Common myeloid progenitor, CD34-positive (primary cell): ENCODE measurements at regions of chr7 and their contacts with region 1.

Region 1: GRCh38 chr7:142323706-142324105 is 65.8 kb upstream of the PRSS58 start:
- DNase-seq: peak; percentile 46 to 56 (median 55)
- H3K4me3 ChIP-seq: no peak overlapping the region
- H3K27ac ChIP-seq: no peak overlapping the region
- H3K4me1 ChIP-seq: peaks cover 8 to 77% (median 63%) of the 10 kb centered on the region in 4 experiments
- H3K27me3 ChIP-seq: no peaks in the 10 kb centered on the region

Region 2: GRCh38 chr7:142279601-142280000 is 44.1 kb before region 1 on chr7:
- CTCF ChIA-PET with region 1: no interaction called
- POLR2A ChIA-PET with region 1: no interaction called
- DNase-seq: peak in 1 of 3 donors; percentile 53
- H3K4me3 ChIP-seq: no peak overlapping the region
- H3K27ac ChIP-seq: no peak overlapping the region
- H3K4me1 ChIP-seq: no peaks in the 10 kb centered on the region
- H3K27me3 ChIP-seq: peaks cover 0 to 2% (median 0%) of the 10 kb centered on the region in 5 experiments

Region 3: GRCh38 chr7:142313528-142313927 is 10.2 kb before region 1 on chr7:
- CTCF ChIA-PET with region 1: interaction called, 44 read pairs
- POLR2A ChIA-PET with region 1: interaction called, 5 read pairs
- DNase-seq: peak; percentile 87 to 99 (median 97)
- H3K4me3 ChIP-seq: peak overlapping the region in 2 of 7 experiments; percentile 45 to 49
- H3K27ac ChIP-seq: peak overlapping the region; percentile 10 to 59
- H3K4me1 ChIP-seq: peaks cover 12 to 47% (median 43%) of the 10 kb centered on the region in 4 experiments
- H3K27me3 ChIP-seq: no peaks in the 10 kb centered on the region

Region 4: GRCh38 chr7:142338633-142339501 is 15.2 kb after region 1 on chr7:
- CTCF ChIA-PET with region 1: interaction called, 165 read pairs
- POLR2A ChIA-PET with region 1: no interaction called
- DNase-seq: peak in 2 of 3 donors; percentile 57 to 64
- H3K4me3 ChIP-seq: no peak overlapping the region
- H3K27ac ChIP-seq: no peak overlapping the region
- H3K4me1 ChIP-seq: peaks cover 0 to 10% (median 3%) of the 10 kb centered on the region in 4 experiments
- H3K27me3 ChIP-seq: no peaks in the 10 kb centered on the region

Region 5: DNA sequence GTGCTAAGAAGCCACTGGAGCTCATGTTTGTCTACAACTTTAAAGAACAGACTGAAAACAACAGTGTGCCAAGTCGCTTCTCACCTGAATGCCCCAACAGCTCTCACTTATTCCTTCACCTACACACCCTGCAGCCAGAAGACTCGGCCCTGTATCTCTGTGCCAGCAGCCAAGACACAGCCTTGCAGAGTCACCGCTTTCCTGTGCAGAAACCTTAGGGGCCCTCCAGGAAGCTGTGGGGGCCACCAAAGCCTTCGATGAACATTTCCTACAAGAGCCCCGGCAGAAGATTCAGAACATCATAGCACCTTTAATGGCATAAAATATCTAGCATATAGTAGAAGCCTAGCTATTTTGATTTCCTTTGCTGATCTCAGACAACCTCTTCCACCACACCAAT is 22.1 kb after region 1 on chr7:
- CTCF ChIA-PET with region 1: interaction called, 165 read pairs
- POLR2A ChIA-PET with region 1: interaction called, 3 read pairs
- DNase-seq: peak; percentile 50 to 86 (median 78)
- H3K4me3 ChIP-seq: peak overlapping the region in 2 of 7 experiments; percentile 3 to 27
- H3K27ac ChIP-seq: no peak overlapping the region
- H3K4me1 ChIP-seq: peaks cover 0 to 29% (median 21%) of the 10 kb centered on the region in 4 experiments
- H3K27me3 ChIP-seq: no peaks in the 10 kb centered on the region

Region 6: DNA sequence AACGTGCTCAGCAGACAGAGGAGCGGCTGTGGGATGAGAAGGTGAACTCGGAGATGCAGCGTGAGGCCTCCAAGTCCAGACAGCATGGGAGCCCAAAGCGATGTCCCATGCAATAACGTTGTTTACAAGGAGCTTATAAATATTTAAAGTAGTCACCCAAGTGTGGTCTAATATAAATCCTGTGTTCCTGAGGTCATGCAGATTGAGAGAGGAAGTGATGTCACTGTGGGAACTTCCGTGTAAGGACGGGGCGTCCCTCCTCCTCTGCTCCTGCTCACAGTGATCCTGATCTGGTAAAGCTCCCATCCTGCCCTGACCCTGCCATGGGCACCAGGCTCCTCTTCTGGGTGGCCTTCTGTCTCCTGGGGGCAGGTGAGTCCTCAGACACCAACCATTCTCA is 28.8 kb after region 1 on chr7:
- CTCF ChIA-PET with region 1: interaction called, 165 read pairs
- POLR2A ChIA-PET with region 1: interaction called, 4 read pairs
- DNase-seq: peak; percentile 53 to 66 (median 62)
- H3K4me3 ChIP-seq: peak overlapping the region in 1 of 7 experiments; percentile 17
- H3K27ac ChIP-seq: no peak overlapping the region
- H3K4me1 ChIP-seq: peaks cover 3 to 41% (median 24%) of the 10 kb centered on the region in 4 experiments
- H3K27me3 ChIP-seq: no peaks in the 10 kb centered on the region

Region 7: GRCh38 chr7:142375666-142376313 is 52.1 kb after region 1 on chr7:
- CTCF ChIA-PET with region 1: no interaction called
- POLR2A ChIA-PET with region 1: no interaction called
- DNase-seq: peak in 2 of 3 donors; percentile 33 to 44
- H3K4me3 ChIP-seq: no peak overlapping the region
- H3K27ac ChIP-seq: no peak overlapping the region
- H3K4me1 ChIP-seq: peaks cover 0 to 19% (median 11%) of the 10 kb centered on the region in 4 experiments
- H3K27me3 ChIP-seq: no peaks in the 10 kb centered on the region